HEK293 (cell line): ENCODE measurements at regions of chr10 and their contacts with region 1.

Region 1: DNA sequence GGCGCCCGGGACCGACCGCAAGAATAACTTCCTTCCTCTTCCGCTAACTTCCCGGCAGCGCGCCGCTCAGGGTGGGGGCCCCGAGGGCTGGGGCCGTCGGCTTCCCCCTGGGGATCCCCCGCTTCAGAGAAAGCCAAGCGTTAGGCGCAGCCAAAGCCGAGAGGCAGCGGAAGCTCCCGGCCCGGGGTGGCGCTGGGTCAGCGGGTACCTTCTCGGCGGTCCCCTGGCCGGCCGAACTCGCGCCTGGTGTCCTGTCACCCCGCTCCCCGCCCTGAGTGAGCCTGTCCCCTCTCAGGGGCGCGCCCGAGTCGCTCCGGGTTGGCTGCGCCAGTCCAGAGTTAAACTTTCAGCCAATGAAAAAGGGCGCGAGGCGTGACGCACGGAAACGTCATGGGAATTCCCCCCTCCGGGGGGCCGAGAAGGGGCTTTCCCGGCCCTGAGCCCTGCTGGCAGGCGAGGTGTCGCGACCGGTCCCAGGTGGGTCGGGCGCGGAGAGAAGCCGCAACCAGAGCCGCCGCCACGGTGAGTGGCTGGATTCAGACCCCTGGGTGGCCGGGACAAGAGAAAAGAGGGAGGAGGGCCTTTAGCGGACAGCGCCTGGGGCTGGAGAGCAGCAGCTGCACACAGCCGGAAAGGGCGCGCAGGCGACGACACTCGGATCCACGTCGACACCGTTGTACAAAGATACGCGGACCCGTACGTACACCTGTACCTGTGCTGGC is 1.3 kb upstream of the NFKB2 start:
- H3K4me3 ChIP-seq: peak overlapping the region; percentile 58
- H3K27ac ChIP-seq: no peak overlapping the region; the same call in 1 of the 2 replicates
- H3K4me1 ChIP-seq: peaks cover 5% of the 10 kb centered on the region; the same call in 1 of the 2 replicates
- CTCF ChIP-seq: peak; percentile 94

Region 2: GRCh38 chr10:102375250-102375649 is 19.0 kb before region 1 on chr10:
- CTCF ChIA-PET with region 1: interaction called, 12 read pairs
- POLR2A ChIA-PET with region 1: no interaction called
- H3K4me3 ChIP-seq: no peak overlapping the region
- H3K27ac ChIP-seq: no peak overlapping the region
- H3K4me1 ChIP-seq: no peaks in the 10 kb centered on the region
- CTCF ChIP-seq: 0 out of 2 replicates have a peak, but pooled peaks have one; percentile 21

Region 3: DNA sequence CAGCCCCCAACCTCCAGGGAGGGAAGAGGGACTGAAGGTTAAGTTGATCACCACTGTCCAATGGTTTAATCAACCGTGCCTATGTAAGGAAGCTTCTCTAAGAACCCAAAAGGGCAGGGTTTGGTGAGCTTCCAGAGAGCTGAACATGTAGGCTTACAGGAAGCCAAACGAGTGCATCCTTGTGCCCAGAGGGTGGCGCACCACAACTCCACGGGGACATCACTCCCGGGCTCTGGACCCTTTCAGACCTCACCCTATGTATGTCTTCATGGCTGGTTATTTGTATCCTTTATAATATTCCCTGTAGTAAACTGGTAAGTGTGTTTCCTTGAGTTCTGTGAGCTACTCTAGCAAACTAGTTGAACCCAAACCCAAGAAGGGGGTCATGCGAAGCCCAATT is 10.2 kb before region 1 on chr10:
- CTCF ChIA-PET with region 1: interaction called, 60 read pairs
- POLR2A ChIA-PET with region 1: no interaction called
- H3K4me3 ChIP-seq: no peak overlapping the region
- H3K27ac ChIP-seq: no peak overlapping the region
- H3K4me1 ChIP-seq: 0 out of 2 replicates have a peak, but pooled peaks cover 2% of the 10 kb centered on the region
- CTCF ChIP-seq: no peak

Region 4: GRCh38 chr10:102565793-102566192 is 171.6 kb after region 1 on chr10:
- CTCF ChIA-PET with region 1: no interaction called
- POLR2A ChIA-PET with region 1: no interaction called
- H3K4me3 ChIP-seq: no peak overlapping the region
- H3K27ac ChIP-seq: no peak overlapping the region
- H3K4me1 ChIP-seq: no peaks in the 10 kb centered on the region
- CTCF ChIP-seq: no peak